Sciatic nerve (tissue), 2 donors: ENCODE measurements at regions of chr3 and their contacts with region 1.

Region 1: DNA sequence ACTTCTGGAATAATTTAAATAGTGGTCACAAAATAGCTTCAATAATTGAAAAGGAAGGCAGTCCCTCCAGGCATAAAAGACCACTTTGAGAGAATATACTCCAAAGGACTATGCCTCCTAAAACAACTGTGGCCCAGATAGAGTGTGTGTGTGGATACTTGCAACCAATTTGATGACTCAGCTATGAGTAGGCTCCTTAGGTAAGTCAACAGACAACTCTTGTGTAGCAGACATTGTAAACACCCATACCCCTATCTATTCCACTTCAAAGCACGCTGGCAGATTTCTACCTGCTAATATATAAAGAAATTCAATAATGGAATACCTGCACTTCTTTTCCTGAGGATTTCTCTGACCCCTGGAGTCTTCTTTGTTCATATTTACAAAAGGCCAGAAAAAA is 254.5 kb downstream of the NEK10 start:
- DNase-seq: no peak
- ATAC-seq: no peak

Region 2: GRCh38 chr3:25191673-25192072 is 1923.0 kb before region 1 on chr3:
- intact Hi-C with region 1: no loop called
- DNase-seq: no peak
- ATAC-seq: no peak

Region 3: DNA sequence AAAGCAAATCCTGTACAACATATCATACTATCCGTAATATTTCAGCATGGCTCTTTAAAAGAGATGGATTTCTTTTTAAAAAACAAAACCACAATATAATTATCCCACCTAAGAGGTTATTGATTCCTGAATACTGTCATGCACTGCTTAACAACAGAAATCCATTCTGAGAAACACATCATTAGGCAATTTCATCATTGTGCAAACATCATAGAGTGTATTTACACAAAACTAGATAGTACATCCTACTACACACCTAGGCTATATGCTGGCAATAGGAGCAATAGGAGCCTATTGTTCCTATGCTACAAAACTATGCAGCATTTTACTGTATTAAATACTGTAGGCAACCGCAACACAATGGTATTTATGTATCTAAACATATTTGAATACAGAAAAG is 12.5 kb after region 1 on chr3:
- intact Hi-C with region 1: no loop called
- DNase-seq: no peak
- ATAC-seq: no peak

Region 4: DNA sequence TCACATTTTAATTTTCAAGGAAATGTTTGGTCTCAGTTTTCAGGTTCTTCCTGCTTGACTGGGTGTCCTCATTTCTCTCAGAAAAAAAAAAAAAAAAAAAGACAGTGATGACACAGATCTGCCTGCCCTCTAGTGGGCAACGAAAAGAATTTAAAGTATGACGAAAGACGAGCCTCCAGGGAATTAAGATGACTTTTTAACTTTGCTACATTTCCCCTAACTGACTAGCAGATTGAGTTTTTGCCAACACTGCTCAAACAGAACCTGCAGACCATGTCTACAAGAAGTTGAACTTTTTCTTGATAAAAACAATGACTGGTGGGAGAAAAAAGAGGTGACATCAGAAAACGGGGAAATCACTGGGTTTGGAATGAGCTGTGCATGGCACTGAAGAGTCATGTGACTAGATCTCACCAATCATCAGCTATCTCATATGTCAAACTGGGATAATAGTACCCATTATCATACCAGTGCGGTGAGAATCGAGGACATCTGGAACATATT is 566.6 kb after region 1 on chr3:
- intact Hi-C with region 1: loop called (anchors 5 kb)
- DNase-seq: no peak
- ATAC-seq: peak; percentile 38